ENCODE measurements at regions of chr10 and their contacts with region 1.

Region 1: GRCh38 chr10:28302638-28303488 is at the start of gene MPP7:
- DNase-seq: peak; percentile 96 to 98
- H3K4me3 ChIP-seq: peak within 1 kb of the TSS; percentile 95 to 99
- H3K27ac ChIP-seq: peak within 1 kb of the TSS; percentile 97 to 99
- H3K4me1 ChIP-seq: peaks cover 0 to 56% (median 3%) of the 10 kb centered on the region in 4 donors
- H3K27me3 ChIP-seq: no peaks in the 10 kb centered on the region
- CTCF ChIP-seq: peak; percentile 49 to 55

Region 2: GRCh38 chr10:28095791-28096378 is 207.0 kb before region 1 on chr10:
- intact Hi-C with region 1: no loop called
- DNase-seq: no peak
- H3K4me3 ChIP-seq: no peak overlapping the region
- H3K27ac ChIP-seq: no peak overlapping the region
- H3K4me1 ChIP-seq: peaks cover 0 to 4% (median 0%) of the 10 kb centered on the region in 4 donors
- H3K27me3 ChIP-seq: no peaks in the 10 kb centered on the region
- CTCF ChIP-seq: no peak

Region 3: DNA sequence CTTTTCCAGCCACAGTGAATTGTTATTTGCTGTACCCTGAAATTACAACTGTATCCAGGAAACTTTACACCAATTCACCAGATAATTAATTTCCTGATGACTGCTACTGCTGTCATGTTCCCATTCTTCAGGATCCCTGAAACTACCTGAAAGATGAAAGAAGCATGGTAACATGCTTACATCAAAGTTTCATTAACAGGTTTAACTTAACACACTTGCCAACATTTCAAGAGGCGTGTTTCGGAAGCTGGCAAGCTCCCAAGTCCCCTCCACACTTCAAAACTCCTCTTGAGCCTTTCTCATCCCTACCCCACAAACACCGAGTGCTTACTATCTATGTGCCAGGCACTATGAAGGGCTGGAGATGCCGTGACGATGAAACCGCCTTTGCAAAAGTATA is 88.6 kb before region 1 on chr10:
- intact Hi-C with region 1: no loop called
- DNase-seq: no peak
- H3K4me3 ChIP-seq: no peak overlapping the region
- H3K27ac ChIP-seq: no peak overlapping the region
- H3K4me1 ChIP-seq: peaks cover 0 to 53% (median 13%) of the 10 kb centered on the region in 4 donors
- H3K27me3 ChIP-seq: no peaks in the 10 kb centered on the region
- CTCF ChIP-seq: no peak

Region 4: GRCh38 chr10:28250782-28251181 is 52.1 kb before region 1 on chr10:
- intact Hi-C with region 1: loop called (anchors 5 kb)
- DNase-seq: no peak
- H3K4me3 ChIP-seq: no peak overlapping the region
- H3K27ac ChIP-seq: peak overlapping the region; percentile 36 to 67
- H3K4me1 ChIP-seq: peaks cover 0 to 78% (median 28%) of the 10 kb centered on the region in 4 donors
- H3K27me3 ChIP-seq: no peaks in the 10 kb centered on the region
- CTCF ChIP-seq: peak; percentile 63 to 70

Region 5: DNA sequence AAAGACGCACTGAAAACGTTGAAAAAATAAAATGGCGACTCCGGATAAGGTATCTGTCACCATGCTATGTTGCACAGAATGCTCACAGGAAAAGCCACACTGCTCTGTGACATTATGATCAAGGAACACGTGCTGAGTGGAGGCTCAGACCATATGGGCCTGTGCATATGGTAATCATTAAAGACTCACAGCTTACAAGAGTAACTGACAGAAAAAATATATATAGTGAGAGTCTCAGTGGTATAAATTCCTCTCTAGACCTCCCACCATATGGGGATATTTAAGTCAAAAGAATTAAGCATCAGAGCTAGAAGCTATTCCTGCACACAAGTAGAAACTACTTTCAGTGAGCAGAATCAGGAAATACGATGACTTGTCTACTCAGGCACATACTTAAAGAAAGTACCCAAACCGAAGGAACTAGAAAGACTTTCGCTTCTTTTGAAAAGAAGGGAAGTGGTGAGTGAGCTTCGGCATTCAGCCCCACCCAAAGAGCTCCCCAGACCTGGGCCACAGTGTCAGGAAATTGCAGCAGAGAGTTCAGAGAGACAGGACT is 65.1 kb after region 1 on chr10:
- intact Hi-C with region 1: loop called (anchors 5 kb)
- DNase-seq: peak in 1 of 2 donors; percentile 41
- H3K4me3 ChIP-seq: no peak overlapping the region
- H3K27ac ChIP-seq: no peak overlapping the region
- H3K4me1 ChIP-seq: no peaks in the 10 kb centered on the region
- H3K27me3 ChIP-seq: no peaks in the 10 kb centered on the region
- CTCF ChIP-seq: no peak

Region 6: DNA sequence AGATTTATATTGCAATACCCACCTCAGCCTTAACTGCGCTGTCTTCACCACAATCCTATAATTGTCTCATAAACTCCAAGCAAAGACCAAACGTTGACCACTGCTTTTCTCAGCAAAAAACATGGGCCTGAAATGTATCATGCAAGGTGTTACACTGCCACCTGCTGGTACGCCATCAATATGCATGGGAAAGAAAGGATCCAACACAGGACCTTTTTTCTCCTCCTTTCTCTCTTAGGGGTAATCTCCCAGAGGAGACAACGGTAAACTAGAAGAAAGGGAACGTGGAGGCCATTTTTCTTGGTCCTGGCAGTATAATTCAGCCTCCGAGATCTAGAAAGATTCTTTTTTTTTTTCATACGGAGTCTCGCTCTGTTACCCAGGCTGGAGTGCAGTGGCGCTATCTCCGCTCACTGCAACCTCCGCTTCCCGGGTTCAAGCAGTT is 79.1 kb after region 1 on chr10:
- intact Hi-C with region 1: loop called (anchors 2 kb)
- DNase-seq: peak; percentile 88 to 92
- H3K4me3 ChIP-seq: no peak overlapping the region
- H3K27ac ChIP-seq: no peak overlapping the region
- H3K4me1 ChIP-seq: peaks cover 0 to 15% (median 0%) of the 10 kb centered on the region in 4 donors
- H3K27me3 ChIP-seq: no peaks in the 10 kb centered on the region
- CTCF ChIP-seq: peak; percentile 95 to 99

Measured in tibial artery (tissue), 4 donors.